ENCODE measurements at regions of chr4 and their contacts with region 1.

Region 1: GRCh38 chr4:1767770-1768366 is 25.2 kb upstream of the FGFR3 start:
- DNase-seq: peak; percentile 76
- ATAC-seq: peak; percentile 20
- H3K4me3 ChIP-seq: peak overlapping the region; percentile 51 to 67 (median 59)
- H3K27ac ChIP-seq: peak overlapping the region; percentile 83
- H3K4me1 ChIP-seq: peaks cover 83% of the 10 kb centered on the region
- H3K27me3 ChIP-seq: no peaks in the 10 kb centered on the region
- CTCF ChIP-seq: peak; percentile 71
- EP300 ChIP-seq: no peak
- POLR2A ChIP-seq: no peak
- RAD21 ChIP-seq: no peak; the same call in 1 of the 2 replicates

Region 2: GRCh38 chr4:1695913-1696312 is 72.0 kb before region 1 on chr4:
- CTCF ChIA-PET with region 1: no interaction called
- POLR2A ChIA-PET with region 1: no interaction called
- in situ Hi-C with region 1: no loop called
- intact Hi-C with region 1: no loop called
- DNase-seq: no peak
- ATAC-seq: no peak
- H3K4me3 ChIP-seq: no peak overlapping the region
- H3K27ac ChIP-seq: no peak overlapping the region
- H3K4me1 ChIP-seq: no peaks in the 10 kb centered on the region
- H3K27me3 ChIP-seq: no peaks in the 10 kb centered on the region
- CTCF ChIP-seq: no peak
- EP300 ChIP-seq: no peak
- POLR2A ChIP-seq: no peak
- RAD21 ChIP-seq: no peak

Region 3: GRCh38 chr4:1784789-1785591 is 17.1 kb after region 1 on chr4:
- CTCF ChIA-PET with region 1: no interaction called
- POLR2A ChIA-PET with region 1: interaction called, 1,258 read pairs
- in situ Hi-C with region 1: no loop called
- intact Hi-C with region 1: loop called (anchors 2 kb)
- DNase-seq: peak; percentile 79
- ATAC-seq: peak; percentile 76
- H3K4me3 ChIP-seq: peak overlapping the region; percentile 29 to 62 (median 29); a peak in 5 of 6 replicates
- H3K27ac ChIP-seq: peak overlapping the region; percentile 69
- H3K4me1 ChIP-seq: peaks cover 96% of the 10 kb centered on the region
- H3K27me3 ChIP-seq: peaks cover 2% of the 10 kb centered on the region in 2 experiments; a peak in 3 of 5 replicates
- CTCF ChIP-seq: no peak
- EP300 ChIP-seq: peak in 1 of 2 experiments; percentile 85; a peak in 1 of 4 replicates
- POLR2A ChIP-seq: no peak
- RAD21 ChIP-seq: no peak

Region 4: DNA sequence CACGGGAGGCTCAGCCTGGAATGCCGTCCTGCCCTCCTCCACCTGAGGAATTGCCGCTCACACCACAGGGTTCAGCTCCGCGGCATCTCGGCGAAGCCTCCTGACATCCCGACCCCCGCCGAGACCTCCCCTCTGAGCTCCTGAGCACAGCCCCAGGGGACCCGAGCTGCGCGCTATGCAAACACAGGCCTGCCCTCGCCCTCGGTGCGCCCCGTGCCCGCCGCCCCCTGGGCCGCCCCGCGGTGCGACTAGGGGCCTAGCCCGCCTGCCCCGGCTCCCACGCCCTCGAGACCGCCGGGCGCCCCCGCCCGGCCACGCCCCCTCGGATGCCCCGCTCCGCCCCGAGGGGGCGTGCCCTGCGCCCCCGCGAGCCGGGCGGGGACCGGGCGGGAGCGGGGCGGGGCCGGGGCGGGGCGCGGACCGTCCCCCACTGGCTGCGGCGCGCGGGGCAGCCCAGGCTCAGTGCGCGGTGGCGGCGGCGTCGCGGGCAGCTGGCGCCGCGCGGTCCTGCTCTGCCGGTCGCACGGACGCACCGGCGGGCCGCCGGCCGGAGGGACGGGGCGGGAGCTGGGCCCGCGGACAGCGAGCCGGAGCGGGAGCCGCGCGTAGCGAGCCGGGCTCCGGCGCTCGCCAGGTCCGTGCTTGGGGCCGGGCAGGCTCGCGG is 25.1 kb after region 1 on chr4 and contains the start of gene FGFR3:
- CTCF ChIA-PET with region 1: no interaction called
- POLR2A ChIA-PET with region 1: interaction called, 1,258 read pairs
- in situ Hi-C with region 1: no loop called
- intact Hi-C with region 1: no loop called
- DNase-seq: peak; percentile 48
- ATAC-seq: peak; percentile 31
- H3K4me3 ChIP-seq: peak within 1 kb of the TSS; percentile 94 to 98 (median 95)
- H3K27ac ChIP-seq: peak within 1 kb of the TSS; percentile 92
- H3K4me1 ChIP-seq: peaks cover 71% of the 10 kb centered on the region
- H3K27me3 ChIP-seq: peaks cover 8 to 22% of the 10 kb centered on the region in 2 experiments; a peak in 4 of 5 replicates
- CTCF ChIP-seq: no peak
- EP300 ChIP-seq: no peak
- POLR2A ChIP-seq: peak in 1 of 2 experiments; percentile 82; a peak in 2 of 4 replicates
- RAD21 ChIP-seq: peak; percentile 30; the same call in 1 of the 2 replicates
- total RNA-seq, gene FGFR3: 40.2 and 103 TPM in 2 replicates